ENCODE measurements at regions of chr6 and their contacts with region 1.

Region 1: DNA sequence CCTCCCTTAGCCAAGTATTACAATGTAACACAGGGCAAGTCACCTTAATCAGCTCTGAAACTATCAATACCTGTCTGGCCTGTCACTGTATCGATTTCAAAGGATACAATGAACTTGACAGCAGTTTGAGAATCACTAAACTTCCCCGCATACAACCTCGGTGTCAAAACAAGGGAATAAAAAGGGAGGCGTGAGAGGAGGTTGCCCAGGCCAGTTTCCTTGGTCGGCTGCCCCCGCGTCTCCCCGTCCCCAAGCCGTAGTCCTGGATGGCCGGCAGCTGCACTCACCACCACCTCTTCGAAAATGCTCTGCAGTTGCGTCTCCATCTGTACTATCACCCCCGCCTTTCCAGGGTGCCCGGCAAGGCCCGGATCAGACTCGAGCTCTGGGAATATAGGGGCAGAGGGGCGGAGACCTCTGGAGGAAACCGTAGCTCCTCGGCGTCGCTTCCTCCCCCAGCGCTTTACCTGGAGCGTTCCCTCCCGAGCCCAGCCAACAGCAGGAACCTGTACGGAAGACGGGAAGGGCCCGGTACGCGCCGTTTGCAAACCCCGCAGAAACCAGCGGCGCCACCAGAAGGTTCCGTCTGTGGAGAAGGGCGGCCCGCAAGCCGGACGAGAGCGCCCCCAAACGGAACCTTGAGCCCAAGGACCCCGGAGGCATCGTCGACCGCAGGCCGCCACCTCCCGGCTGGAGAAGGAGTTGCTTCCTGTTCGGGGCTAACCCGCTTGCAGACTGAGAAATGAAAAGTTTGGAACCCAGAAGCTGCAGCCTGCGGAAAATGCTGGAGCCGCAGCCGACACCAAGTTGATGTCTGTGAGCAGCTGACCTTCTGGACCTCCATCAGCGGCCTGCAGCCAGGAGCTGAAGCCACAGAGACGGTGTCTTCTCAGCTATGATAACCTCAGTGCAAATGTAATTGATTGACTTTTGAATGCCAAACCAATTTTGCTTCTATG is at the start of gene MED23:
- DNase-seq: peak; percentile 80
- ATAC-seq: peak; percentile 96
- H3K4me3 ChIP-seq: peak within 1 kb of the TSS; percentile 89
- H3K27ac ChIP-seq: peak within 1 kb of the TSS; percentile 54
- H3K4me1 ChIP-seq: no peaks in the 10 kb centered on the region
- H3K27me3 ChIP-seq: no peaks in the 10 kb centered on the region
- CTCF ChIP-seq: peak; percentile 99 to 100 (median 100); a peak in 5 of 6 replicates
- EP300 ChIP-seq: peak in 1 of 2 experiments; percentile 52; a peak in 1 of 4 replicates
- POLR2A ChIP-seq: peak; percentile 87
- RAD21 ChIP-seq: peak; percentile 81
- polyA plus RNA-seq, gene MED23: 7.1 to 9.0 TPM

Region 2: GRCh38 chr6:131023834-131024504 is 604.0 kb before region 1 on chr6:
- CTCF ChIA-PET with region 1: no interaction called
- POLR2A ChIA-PET with region 1: no interaction called
- RAD21 ChIA-PET with region 1: no interaction called
- SMC1A ChIA-PET with region 1: no interaction called
- in situ Hi-C with region 1: no loop called
- intact Hi-C with region 1: no loop called
- DNase-seq: no peak
- ATAC-seq: peak; percentile 41
- H3K4me3 ChIP-seq: no peak overlapping the region
- H3K27ac ChIP-seq: no peak overlapping the region
- H3K4me1 ChIP-seq: no peaks in the 10 kb centered on the region
- H3K27me3 ChIP-seq: no peaks in the 10 kb centered on the region
- CTCF ChIP-seq: no peak
- EP300 ChIP-seq: no peak
- POLR2A ChIP-seq: no peak
- RAD21 ChIP-seq: no peak

Region 3: GRCh38 chr6:131199568-131200272 is 428.3 kb before region 1 on chr6:
- CTCF ChIA-PET with region 1: interaction called, 14 read pairs
- POLR2A ChIA-PET with region 1: no interaction called
- RAD21 ChIA-PET with region 1: interaction called, 3 read pairs
- SMC1A ChIA-PET with region 1: interaction called, 5 read pairs
- in situ Hi-C with region 1: no loop called
- intact Hi-C with region 1: loop called (anchors 1 kb)
- DNase-seq: peak; percentile 71
- ATAC-seq: peak; percentile 100
- H3K4me3 ChIP-seq: no peak overlapping the region
- H3K27ac ChIP-seq: peak overlapping the region; percentile 15; the same call in 1 of the 2 replicates
- H3K4me1 ChIP-seq: peaks cover 9% of the 10 kb centered on the region
- H3K27me3 ChIP-seq: no peaks in the 10 kb centered on the region
- CTCF ChIP-seq: peak; percentile 84 to 89 (median 89)
- EP300 ChIP-seq: no peak
- POLR2A ChIP-seq: no peak
- RAD21 ChIP-seq: peak; percentile 90

Region 4: DNA sequence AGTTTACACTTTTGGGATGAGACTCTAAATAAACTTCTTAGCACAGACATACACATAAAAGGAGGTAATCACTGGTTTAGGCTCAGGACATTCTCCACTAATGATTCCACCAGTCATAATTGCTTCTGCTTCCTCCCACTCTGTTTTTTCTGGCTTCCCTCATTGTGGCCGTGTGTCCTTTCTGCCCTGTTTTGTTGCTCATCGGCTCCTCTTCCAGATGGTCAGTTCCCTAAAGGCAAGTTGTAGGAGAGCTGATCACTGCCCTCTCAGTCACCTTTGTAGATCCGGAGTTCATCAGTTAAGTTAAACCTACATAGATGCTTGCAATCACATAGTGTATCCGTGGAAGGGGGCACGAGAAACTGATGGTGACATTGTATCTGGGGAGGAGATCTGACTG is 255.5 kb before region 1 on chr6:
- CTCF ChIA-PET with region 1: no interaction called
- POLR2A ChIA-PET with region 1: no interaction called
- RAD21 ChIA-PET with region 1: no interaction called
- SMC1A ChIA-PET with region 1: no interaction called
- in situ Hi-C with region 1: no loop called
- intact Hi-C with region 1: no loop called
- DNase-seq: no peak
- ATAC-seq: no peak
- H3K4me3 ChIP-seq: no peak overlapping the region
- H3K27ac ChIP-seq: no peak overlapping the region
- H3K4me1 ChIP-seq: peaks cover 4% of the 10 kb centered on the region
- H3K27me3 ChIP-seq: no peaks in the 10 kb centered on the region
- CTCF ChIP-seq: no peak
- EP300 ChIP-seq: no peak
- POLR2A ChIP-seq: no peak
- RAD21 ChIP-seq: no peak

Region 5: DNA sequence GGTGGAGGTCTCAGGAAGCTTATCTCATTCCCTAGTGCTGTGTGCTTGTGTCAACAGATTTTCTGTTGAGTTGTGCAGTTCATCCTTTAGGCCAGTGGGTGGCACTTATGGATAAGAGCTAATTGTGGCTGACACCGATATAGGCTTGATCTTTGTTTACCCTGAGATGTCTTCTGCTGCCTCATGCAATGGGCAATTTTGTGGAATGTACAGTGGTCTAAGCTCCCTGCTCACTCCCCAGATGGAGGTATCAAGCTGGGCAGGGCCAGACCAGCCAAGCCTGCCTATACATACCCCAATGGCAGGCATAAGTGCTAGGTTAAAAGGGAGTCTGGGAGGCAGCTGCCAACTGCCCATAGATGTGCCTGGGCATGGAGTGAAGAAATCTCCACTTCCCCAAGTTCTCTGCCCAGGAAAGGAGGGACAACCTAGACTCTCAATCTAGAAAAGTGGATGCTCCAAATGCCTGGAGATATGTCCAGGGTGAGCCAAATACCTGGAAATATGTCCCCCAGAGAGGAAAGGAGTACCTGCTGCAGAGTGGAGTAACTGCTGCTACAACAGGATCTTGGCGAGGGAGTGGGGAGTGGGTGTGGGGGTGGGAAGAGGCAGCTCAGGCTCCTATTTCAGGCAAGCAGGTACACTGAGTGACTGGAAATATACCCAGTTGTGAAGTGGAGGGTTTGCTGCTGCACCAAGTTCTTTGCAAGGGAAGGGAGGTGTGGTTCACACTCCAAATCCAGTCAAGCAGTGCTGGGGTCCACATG is 108.2 kb before region 1 on chr6:
- CTCF ChIA-PET with region 1: interaction called, 17 read pairs
- POLR2A ChIA-PET with region 1: no interaction called
- RAD21 ChIA-PET with region 1: interaction called, 9 read pairs
- SMC1A ChIA-PET with region 1: no interaction called
- in situ Hi-C with region 1: no loop called
- intact Hi-C with region 1: loop called (anchors 2 kb)
- DNase-seq: no peak
- ATAC-seq: peak; percentile 96
- H3K4me3 ChIP-seq: no peak overlapping the region
- H3K27ac ChIP-seq: no peak overlapping the region
- H3K4me1 ChIP-seq: no peaks in the 10 kb centered on the region
- H3K27me3 ChIP-seq: no peaks in the 10 kb centered on the region
- CTCF ChIP-seq: peak; percentile 56 to 70 (median 66); a peak in 5 of 6 replicates
- EP300 ChIP-seq: no peak
- POLR2A ChIP-seq: no peak
- RAD21 ChIP-seq: peak; percentile 64

Region 6: DNA sequence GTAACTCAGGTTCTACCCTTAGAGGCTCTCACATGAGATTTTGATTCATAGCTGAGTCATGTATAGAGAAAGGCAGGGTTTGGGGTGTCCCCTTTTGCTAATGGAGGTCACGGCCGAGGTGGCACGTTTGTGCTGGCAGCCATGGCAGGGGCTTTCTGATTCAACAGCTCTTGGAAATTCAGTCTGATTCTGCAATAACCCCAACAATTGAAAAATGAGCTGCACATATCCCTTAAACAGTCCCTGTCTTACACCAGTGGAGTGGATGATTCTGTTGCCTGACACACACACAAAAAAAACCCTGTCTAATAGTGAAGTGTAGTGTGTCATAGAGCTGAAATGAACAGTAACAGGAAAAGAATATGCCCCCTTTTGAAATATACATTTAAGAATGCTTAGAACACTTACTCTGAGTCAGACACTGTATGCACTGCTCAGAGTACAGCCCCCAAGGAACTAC is 95.4 kb before region 1 on chr6:
- CTCF ChIA-PET with region 1: interaction called, 12 read pairs
- POLR2A ChIA-PET with region 1: no interaction called
- RAD21 ChIA-PET with region 1: interaction called, 6 read pairs
- SMC1A ChIA-PET with region 1: interaction called, 4 read pairs
- in situ Hi-C with region 1: no loop called
- intact Hi-C with region 1: no loop called
- DNase-seq: peak; percentile 23
- ATAC-seq: peak; percentile 93
- H3K4me3 ChIP-seq: no peak overlapping the region
- H3K27ac ChIP-seq: no peak overlapping the region
- H3K4me1 ChIP-seq: no peaks in the 10 kb centered on the region
- H3K27me3 ChIP-seq: no peaks in the 10 kb centered on the region
- CTCF ChIP-seq: no peak
- EP300 ChIP-seq: no peak
- POLR2A ChIP-seq: no peak
- RAD21 ChIP-seq: no peak

Region 7: GRCh38 chr6:131575834-131576478 is 52.0 kb before region 1 on chr6:
- CTCF ChIA-PET with region 1: no interaction called
- POLR2A ChIA-PET with region 1: no interaction called
- RAD21 ChIA-PET with region 1: no interaction called
- SMC1A ChIA-PET with region 1: no interaction called
- in situ Hi-C with region 1: no loop called
- intact Hi-C with region 1: no loop called
- DNase-seq: no peak
- ATAC-seq: no peak
- H3K4me3 ChIP-seq: no peak overlapping the region
- H3K27ac ChIP-seq: no peak overlapping the region
- H3K4me1 ChIP-seq: no peaks in the 10 kb centered on the region
- H3K27me3 ChIP-seq: no peaks in the 10 kb centered on the region
- CTCF ChIP-seq: no peak
- EP300 ChIP-seq: no peak
- POLR2A ChIP-seq: no peak
- RAD21 ChIP-seq: no peak

Region 8: DNA sequence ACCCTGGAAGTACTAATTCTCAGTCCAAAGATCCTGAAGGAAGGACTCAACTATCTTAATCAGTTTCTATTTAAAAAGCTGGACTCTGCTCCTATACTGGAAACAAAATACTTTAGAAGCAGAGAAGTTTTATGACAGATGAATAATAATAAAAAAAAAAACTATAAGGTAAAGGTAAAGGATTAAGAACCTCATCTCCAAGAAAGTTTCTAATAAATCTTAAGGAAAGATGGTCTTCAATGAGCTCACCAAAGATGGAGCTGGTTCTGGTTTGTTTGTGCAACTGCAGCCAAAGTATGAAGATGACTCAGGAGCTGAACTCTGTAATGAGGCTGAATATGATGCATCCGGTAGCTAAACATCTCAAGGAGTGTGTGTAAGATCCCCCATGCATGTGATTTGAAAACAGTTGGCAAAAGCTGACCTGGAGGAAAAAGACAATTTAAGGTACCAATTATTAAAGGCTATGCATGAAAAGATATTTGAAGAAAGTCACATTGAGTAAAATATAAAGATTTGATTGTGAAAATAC is 25.2 kb before region 1 on chr6:
- CTCF ChIA-PET with region 1: interaction called, 16 read pairs
- POLR2A ChIA-PET with region 1: no interaction called
- RAD21 ChIA-PET with region 1: no interaction called
- SMC1A ChIA-PET with region 1: no interaction called
- in situ Hi-C with region 1: no loop called
- intact Hi-C with region 1: no loop called
- DNase-seq: no peak
- ATAC-seq: no peak
- H3K4me3 ChIP-seq: no peak overlapping the region
- H3K27ac ChIP-seq: no peak overlapping the region
- H3K4me1 ChIP-seq: no peaks in the 10 kb centered on the region
- H3K27me3 ChIP-seq: no peaks in the 10 kb centered on the region
- CTCF ChIP-seq: no peak
- EP300 ChIP-seq: no peak
- POLR2A ChIP-seq: no peak
- RAD21 ChIP-seq: no peak

Region 9: GRCh38 chr6:131615275-131615674 is 12.7 kb before region 1 on chr6:
- CTCF ChIA-PET with region 1: interaction called, 26 read pairs
- POLR2A ChIA-PET with region 1: interaction called, 3 read pairs
- RAD21 ChIA-PET with region 1: interaction called, 4 read pairs
- SMC1A ChIA-PET with region 1: interaction called, 6 read pairs
- in situ Hi-C with region 1: no loop called
- intact Hi-C with region 1: no loop called
- DNase-seq: no peak
- ATAC-seq: no peak
- H3K4me3 ChIP-seq: no peak overlapping the region
- H3K27ac ChIP-seq: no peak overlapping the region
- H3K4me1 ChIP-seq: no peaks in the 10 kb centered on the region
- H3K27me3 ChIP-seq: no peaks in the 10 kb centered on the region
- CTCF ChIP-seq: no peak
- EP300 ChIP-seq: no peak
- POLR2A ChIP-seq: no peak
- RAD21 ChIP-seq: no peak